Calu3 (cell line): ENCODE measurements at regions of chr16 and their contacts with region 1.

Region 1: GRCh38 chr16:68237243-68238028 is 1.5 kb upstream of the ESRP2 start:
- DNase-seq: peak; percentile 99
- H3K4me3 Mint-ChIP-seq: peak overlapping the region; percentile 74
- H3K27ac Mint-ChIP-seq: peak overlapping the region; percentile 73
- H3K4me1 Mint-ChIP-seq: peaks cover 30% of the 10 kb centered on the region
- H3K27me3 Mint-ChIP-seq: no peaks in the 10 kb centered on the region
- CTCF ChIP-seq: no peak

Region 2: GRCh38 chr16:68146585-68146984 is 90.9 kb before region 1 on chr16:
- CTCF ChIA-PET with region 1: no interaction called
- intact Hi-C with region 1: loop called (anchors 2 kb)
- DNase-seq: no peak
- H3K4me3 Mint-ChIP-seq: no peak overlapping the region
- H3K27ac Mint-ChIP-seq: no peak overlapping the region
- H3K4me1 Mint-ChIP-seq: peaks cover 10% of the 10 kb centered on the region
- H3K27me3 Mint-ChIP-seq: no peaks in the 10 kb centered on the region
- CTCF ChIP-seq: no peak